ENCODE measurements at regions of chr16 and their contacts with region 1.

Region 1: DNA sequence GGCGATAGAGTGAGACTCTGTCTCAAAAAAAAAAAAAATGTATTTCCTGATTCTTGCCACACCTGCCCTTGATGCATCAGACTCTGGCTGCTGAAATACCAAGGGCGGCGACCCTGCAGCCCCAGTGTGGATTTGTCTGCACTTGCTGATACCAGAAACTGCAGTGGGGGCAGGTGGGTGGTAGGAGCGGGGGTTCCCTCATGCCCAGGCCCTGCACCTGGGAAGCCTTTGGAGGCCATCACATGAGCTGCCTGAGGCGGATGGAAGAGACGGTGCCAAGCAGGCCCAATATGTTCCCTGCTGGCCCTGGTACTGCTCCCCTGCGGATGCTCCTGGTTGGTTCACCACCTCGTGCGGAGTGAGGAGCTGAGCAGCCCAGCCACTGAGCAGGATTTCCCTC is 50.6 kb downstream of the MARF1 start:
- DNase-seq: no peak
- H3K4me3 ChIP-seq: no peak overlapping the region
- H3K4me1 ChIP-seq: no peaks in the 10 kb centered on the region
- H3K27me3 ChIP-seq: no peaks in the 10 kb centered on the region

Region 2: DNA sequence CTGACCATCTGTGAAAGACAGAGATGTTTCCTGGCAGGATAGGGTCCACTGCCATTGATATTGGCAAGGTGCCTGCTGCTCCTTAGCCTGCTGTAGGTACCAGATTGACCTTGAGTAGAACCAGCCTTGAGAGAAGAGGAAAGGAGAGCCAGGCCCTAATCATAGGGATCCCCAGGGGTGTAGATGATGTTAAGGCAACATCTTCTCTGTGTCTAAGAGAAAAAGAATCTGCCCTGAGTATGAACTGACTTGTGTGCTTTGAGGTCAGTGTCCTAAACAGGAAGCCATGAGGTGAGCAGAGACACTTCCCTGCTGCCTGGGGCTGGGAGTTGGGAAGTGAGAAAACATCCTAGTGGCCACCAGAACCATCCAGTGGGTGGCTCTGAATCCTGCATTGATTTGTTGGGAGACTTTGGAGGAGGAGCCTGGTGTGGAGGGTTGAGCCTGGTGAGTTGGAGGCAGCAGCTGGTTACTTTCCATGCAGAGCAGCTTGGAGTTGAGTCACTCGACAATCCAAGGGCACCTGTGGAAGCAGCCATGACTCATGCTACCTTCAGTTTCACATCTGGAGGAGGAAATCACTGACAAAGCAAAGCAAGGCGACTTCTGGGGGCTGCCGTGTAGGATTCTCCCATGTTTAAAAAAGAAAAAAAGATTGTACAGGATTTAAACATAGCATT is 110.1 kb before region 1 on chr16:
- in situ Hi-C with region 1: loop called (anchors 25 kb)
- DNase-seq: peak in 1 of 2 experiments; percentile 11
- H3K4me3 ChIP-seq: no peak overlapping the region
- H3K4me1 ChIP-seq: no peaks in the 10 kb centered on the region
- H3K27me3 ChIP-seq: no peaks in the 10 kb centered on the region

Measured in HAP-1 (cell line).